Activated B cell treated with CpG ODN at 0.5 μM for 24 hours (primary cell): ENCODE measurements at regions of chr4 and their contacts with region 1.

Region 1: GRCh38 chr4:3346146-3346545 is 53.3 kb downstream of the RGS12 start:
- DNase-seq: no peak
- ATAC-seq: peak; percentile 99
- H3K4me3 Mint-ChIP-seq: no peak overlapping the region
- H3K27ac Mint-ChIP-seq: no peak overlapping the region
- H3K4me1 Mint-ChIP-seq: peaks cover 4% of the 10 kb centered on the region
- H3K27me3 Mint-ChIP-seq: no peaks in the 10 kb centered on the region
- CTCF ChIP-seq: peak; percentile 18

Region 2: GRCh38 chr4:3469386-3470243 is 123.5 kb after region 1 on chr4:
- CTCF ChIA-PET with region 1: no interaction called
- POLR2A ChIA-PET with region 1: no interaction called
- intact Hi-C with region 1: no loop called
- DNase-seq: no peak
- ATAC-seq: no peak
- H3K4me3 Mint-ChIP-seq: no peak overlapping the region
- H3K27ac Mint-ChIP-seq: no peak overlapping the region
- H3K4me1 Mint-ChIP-seq: no peaks in the 10 kb centered on the region
- H3K27me3 Mint-ChIP-seq: peaks cover 14% of the 10 kb centered on the region
- CTCF ChIP-seq: no peak

Region 3: DNA sequence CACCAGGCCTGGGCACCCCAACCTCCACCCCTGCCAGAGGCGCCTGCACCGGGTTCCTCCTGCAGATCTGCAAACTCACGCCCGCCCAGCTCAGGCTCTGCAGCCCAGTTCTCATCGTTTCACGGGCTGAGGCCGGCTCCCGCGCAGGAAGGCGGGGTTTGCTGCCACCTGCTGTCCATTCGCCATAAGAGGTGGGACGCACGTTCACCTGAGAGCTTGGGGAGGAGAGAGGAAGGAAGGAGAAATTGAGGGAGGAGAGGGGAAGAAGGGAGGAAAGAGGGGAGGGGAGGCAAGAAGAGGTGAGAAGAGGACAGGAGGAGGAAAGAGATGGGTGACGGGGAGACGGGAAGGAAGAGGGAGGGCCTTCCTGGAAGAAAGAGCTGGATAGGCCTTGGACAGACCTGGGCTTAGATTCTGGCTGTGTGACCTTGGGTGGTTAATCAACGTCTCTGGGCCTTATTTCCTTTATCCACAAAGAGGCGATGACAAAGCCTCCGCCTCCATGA is 534.5 kb after region 1 on chr4:
- CTCF ChIA-PET with region 1: interaction called, 5 read pairs
- POLR2A ChIA-PET with region 1: no interaction called
- intact Hi-C with region 1: loop called (anchors 1 kb)
- DNase-seq: peak; percentile 59
- ATAC-seq: peak; percentile 90
- H3K4me3 Mint-ChIP-seq: peak overlapping the region; percentile 44
- H3K27ac Mint-ChIP-seq: no peak overlapping the region
- H3K4me1 Mint-ChIP-seq: peaks cover 15% of the 10 kb centered on the region
- H3K27me3 Mint-ChIP-seq: peaks cover 33% of the 10 kb centered on the region
- CTCF ChIP-seq: no peak